MCF 10A (cell line): ENCODE measurements at regions of chr5 and their contacts with region 1.

Region 1: DNA sequence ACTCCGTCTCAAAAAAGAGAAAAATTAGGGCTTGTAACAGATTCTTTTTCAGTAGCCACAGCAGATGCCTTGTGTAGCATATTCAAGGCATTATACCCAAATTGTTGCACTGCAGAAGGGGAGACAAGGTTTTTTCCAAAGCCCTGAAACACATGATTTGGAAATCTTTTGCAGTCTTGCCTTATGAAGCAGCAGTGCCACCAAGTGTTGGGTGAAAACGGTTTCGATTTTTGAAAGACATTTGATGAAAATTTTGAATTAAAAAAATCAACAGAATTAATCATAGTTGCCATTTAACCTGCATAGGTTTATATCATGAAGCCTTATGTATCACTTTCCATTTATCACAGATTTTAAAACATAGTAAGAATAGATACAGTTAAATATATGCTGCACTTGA is 479.5 kb downstream of the TAF11L14 start:
- DNase-seq: peak; percentile 41
- H3K4me3 Mint-ChIP-seq: peak overlapping the region; percentile 49
- H3K27ac Mint-ChIP-seq: peak overlapping the region; percentile 37
- H3K4me1 Mint-ChIP-seq: peaks cover 8% of the 10 kb centered on the region
- H3K27me3 Mint-ChIP-seq: no peaks in the 10 kb centered on the region
- CTCF ChIP-seq: peak; percentile 48

Region 2: DNA sequence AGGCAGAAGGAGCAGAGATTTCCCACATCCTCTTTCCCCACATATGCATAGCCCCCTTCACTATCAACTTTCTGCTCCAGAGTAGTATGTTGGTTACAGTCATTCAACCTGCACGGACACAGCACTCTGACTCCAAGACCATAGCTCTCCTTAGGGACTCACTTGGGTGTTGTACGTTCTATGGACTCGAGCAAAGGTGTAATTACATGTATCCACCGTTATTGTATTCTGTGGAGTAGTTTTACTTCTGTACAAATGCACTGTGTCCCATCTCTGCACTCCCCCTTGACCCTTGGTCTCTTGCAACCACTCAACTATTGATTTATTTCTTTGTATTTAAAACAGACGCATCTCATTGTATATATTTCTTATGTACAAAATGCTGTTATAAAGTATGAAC is 610.1 kb before region 1 on chr5:
- CTCF ChIA-PET with region 1: no interaction called
- POLR2A ChIA-PET with region 1: no interaction called
- intact Hi-C with region 1: no loop called
- DNase-seq: no peak
- H3K4me3 Mint-ChIP-seq: no peak overlapping the region
- H3K27ac Mint-ChIP-seq: no peak overlapping the region
- H3K4me1 Mint-ChIP-seq: no peaks in the 10 kb centered on the region
- H3K27me3 Mint-ChIP-seq: no peaks in the 10 kb centered on the region
- CTCF ChIP-seq: no peak

Region 3: DNA sequence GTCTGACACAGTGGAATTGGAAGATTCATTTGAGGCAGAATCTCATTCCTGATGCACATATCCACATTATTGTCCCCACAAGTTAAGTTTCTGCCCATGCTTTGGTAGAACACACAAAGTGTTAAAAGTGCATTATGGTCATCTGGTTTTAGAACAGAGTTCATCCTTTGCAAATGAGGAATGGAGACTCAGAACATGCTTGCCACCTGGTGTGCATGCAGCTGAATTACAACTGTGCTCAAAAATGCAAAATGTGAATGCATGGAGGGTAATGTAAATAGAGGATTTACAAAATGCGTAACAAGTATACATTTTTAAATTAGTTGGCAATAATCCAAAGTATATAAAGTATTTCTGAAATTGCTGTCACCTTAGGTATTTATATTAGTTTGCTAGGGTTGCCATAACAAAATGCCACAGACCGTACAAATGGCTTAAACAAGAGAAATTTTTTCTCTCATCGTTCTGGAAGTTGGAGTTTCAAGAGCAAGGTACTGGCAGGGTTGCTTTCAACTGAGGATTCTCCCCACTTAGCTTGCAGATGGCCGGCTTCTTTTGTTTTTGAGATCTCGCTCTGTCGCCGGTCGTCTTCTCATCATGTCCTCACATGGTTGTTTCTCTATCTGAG is 191.7 kb after region 1 on chr5:
- CTCF ChIA-PET with region 1: interaction called, 10 read pairs
- POLR2A ChIA-PET with region 1: no interaction called
- intact Hi-C with region 1: loop called (anchors 5 kb)
- DNase-seq: peak; percentile 51
- H3K4me3 Mint-ChIP-seq: no peak overlapping the region
- H3K27ac Mint-ChIP-seq: no peak overlapping the region
- H3K4me1 Mint-ChIP-seq: peaks cover 7% of the 10 kb centered on the region
- H3K27me3 Mint-ChIP-seq: no peaks in the 10 kb centered on the region
- CTCF ChIP-seq: peak; percentile 80